IMR-90 (cell line): ENCODE measurements at regions of chr3 and their contacts with region 1.

Region 1: DNA sequence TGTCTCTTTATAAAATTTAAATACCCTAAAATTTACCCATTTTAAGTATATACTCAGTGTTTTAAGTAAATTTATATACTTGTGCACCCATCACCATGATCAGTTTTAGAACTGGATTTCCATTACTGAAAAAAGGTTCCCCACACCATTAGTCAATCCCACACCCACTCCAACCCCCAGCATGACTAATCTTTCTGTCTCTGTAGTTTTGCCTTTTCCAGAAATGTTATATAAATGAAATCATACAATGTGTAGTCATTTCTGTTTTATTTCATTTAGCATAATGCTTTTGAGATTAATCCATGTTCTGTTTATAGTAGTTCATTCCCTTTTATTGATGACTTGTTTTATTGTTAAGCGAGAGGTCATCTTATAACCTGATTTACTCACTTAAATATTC is 66.1 kb upstream of the LIMD1 start:
- DNase-seq: peak; percentile 83
- ATAC-seq: peak; percentile 78
- H3K4me3 ChIP-seq: no peak overlapping the region
- H3K27ac ChIP-seq: no peak overlapping the region
- H3K4me1 ChIP-seq: peaks cover 14% of the 10 kb centered on the region
- H3K27me3 ChIP-seq: no peaks in the 10 kb centered on the region
- CTCF ChIP-seq: no peak
- POLR2A ChIP-seq: no peak
- RAD21 ChIP-seq: no peak

Region 2: GRCh38 chr3:45199837-45200648 is 328.4 kb before region 1 on chr3:
- CTCF ChIA-PET with region 1: no interaction called
- POLR2A ChIA-PET with region 1: no interaction called
- dilution Hi-C with region 1: no loop called
- in situ Hi-C with region 1: no loop called
- intact Hi-C with region 1: no loop called
- DNase-seq: peak; percentile 92
- ATAC-seq: peak; percentile 84
- H3K4me3 ChIP-seq: no peak overlapping the region
- H3K27ac ChIP-seq: peak overlapping the region; percentile 59
- H3K4me1 ChIP-seq: peaks cover 20% of the 10 kb centered on the region
- H3K27me3 ChIP-seq: no peaks in the 10 kb centered on the region
- CTCF ChIP-seq: no peak
- POLR2A ChIP-seq: no peak
- RAD21 ChIP-seq: no peak

Region 3: DNA sequence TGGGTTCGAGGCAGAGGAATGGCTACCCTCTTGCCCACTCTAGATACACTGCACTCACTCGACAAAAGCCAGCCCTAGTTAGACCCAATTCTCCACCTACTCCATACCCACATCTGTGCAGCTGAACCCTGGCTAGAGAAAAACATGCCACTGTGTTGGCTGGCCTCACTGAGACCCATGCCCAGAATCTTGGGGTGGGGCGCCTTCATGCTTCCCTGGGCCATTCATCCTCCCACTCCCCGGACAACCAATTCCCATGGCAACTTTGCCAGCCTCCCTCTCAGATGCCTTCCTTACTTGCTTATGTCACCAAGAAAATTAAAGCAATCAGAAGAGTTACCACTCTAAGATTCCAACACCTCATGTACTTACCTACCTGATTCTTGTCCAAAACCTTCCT is 56.9 kb after region 1 on chr3:
- CTCF ChIA-PET with region 1: no interaction called
- POLR2A ChIA-PET with region 1: no interaction called
- dilution Hi-C with region 1: no loop called
- in situ Hi-C with region 1: loop called (anchors 5 kb)
- intact Hi-C with region 1: no loop called
- DNase-seq: no peak
- ATAC-seq: no peak
- H3K4me3 ChIP-seq: no peak overlapping the region
- H3K27ac ChIP-seq: no peak overlapping the region
- H3K4me1 ChIP-seq: peaks cover 11% of the 10 kb centered on the region
- H3K27me3 ChIP-seq: no peaks in the 10 kb centered on the region
- CTCF ChIP-seq: no peak
- POLR2A ChIP-seq: no peak
- RAD21 ChIP-seq: no peak